Activated CD8-positive, alpha-beta T cell treated with anti-CD3 and anti-CD28 coated beads, Interleukin-2, amount 10 ng/mL, durations not matched to agents 7 days and 5 days (primary cell): ENCODE measurements at regions of chr2 and their contacts with region 1.

Region 1: GRCh38 chr2:231052494-231053451 is 3.9 kb upstream of the PSMD1 start:
- DNase-seq: peak; percentile 88
- ATAC-seq: peak; percentile 78
- H3K4me3 Mint-ChIP-seq: peak overlapping the region; percentile 84
- H3K27ac Mint-ChIP-seq: peak overlapping the region; percentile 15
- H3K4me1 Mint-ChIP-seq: peaks cover 46% of the 10 kb centered on the region
- H3K27me3 Mint-ChIP-seq: peaks cover 22% of the 10 kb centered on the region

Region 2: DNA sequence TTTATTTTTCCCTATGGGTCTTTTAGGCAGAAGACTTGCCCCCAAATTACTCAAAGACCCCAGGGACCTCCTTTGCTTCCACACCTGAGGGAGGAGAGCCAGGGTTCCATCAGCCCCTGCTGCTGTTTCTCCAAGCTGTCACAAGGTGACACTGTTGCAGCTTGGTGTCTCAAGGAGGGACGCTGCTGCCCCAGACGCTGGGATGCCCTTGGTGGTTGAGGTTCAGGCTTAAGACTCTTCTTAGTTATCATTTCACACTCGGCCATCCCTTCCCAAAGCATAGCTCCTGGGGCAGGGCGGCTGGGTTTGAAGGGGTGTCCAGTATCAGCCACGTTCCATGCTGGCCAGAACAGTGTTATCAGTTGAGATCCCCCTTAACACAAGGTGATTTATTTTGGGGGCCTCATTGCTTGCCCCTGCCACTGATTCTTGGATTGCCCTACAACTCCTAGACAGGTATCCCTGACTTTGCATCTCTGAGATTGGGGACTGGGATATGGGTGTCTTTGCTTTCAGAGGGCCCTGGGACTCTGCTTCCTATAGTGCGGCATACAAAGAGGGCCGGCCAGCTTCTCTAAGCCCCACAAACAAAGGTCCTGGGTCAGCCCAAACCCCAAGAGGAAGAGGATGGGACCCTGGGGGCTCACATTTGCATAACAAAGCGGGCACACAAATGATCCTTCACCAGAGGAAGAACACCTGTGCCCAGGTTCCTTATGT is 150.4 kb before region 1 on chr2:
- CTCF ChIA-PET with region 1: interaction called, 13 read pairs
- POLR2A ChIA-PET with region 1: no interaction called
- DNase-seq: peak; percentile 75
- ATAC-seq: peak; percentile 52
- H3K4me3 Mint-ChIP-seq: no peak overlapping the region
- H3K27ac Mint-ChIP-seq: no peak overlapping the region
- H3K4me1 Mint-ChIP-seq: peaks cover 37% of the 10 kb centered on the region
- H3K27me3 Mint-ChIP-seq: no peaks in the 10 kb centered on the region

Region 3: DNA sequence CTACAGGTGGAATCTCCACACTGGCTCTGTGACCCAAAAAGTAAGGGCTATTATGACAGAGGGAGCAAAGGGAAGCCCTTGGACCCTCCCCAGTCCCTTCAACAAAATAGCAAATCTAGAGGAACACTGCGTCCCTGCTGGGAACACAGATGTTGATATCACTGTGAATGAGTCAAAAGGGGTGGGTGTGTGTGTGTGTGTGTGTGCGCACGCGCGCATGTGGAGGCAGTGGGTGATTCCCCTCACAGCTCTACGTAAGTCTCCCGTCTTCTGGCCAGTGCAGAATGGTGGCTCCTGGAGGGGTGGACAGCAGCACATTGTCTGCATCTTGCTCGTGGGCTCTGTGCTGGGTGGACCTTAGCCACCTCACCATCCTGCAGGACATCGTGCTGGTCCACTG is 23.2 kb before region 1 on chr2:
- CTCF ChIA-PET with region 1: interaction called, 16 read pairs
- POLR2A ChIA-PET with region 1: no interaction called
- DNase-seq: no peak
- ATAC-seq: no peak
- H3K4me3 Mint-ChIP-seq: no peak overlapping the region
- H3K27ac Mint-ChIP-seq: no peak overlapping the region
- H3K4me1 Mint-ChIP-seq: no peaks in the 10 kb centered on the region
- H3K27me3 Mint-ChIP-seq: peaks cover 31% of the 10 kb centered on the region

Region 4: DNA sequence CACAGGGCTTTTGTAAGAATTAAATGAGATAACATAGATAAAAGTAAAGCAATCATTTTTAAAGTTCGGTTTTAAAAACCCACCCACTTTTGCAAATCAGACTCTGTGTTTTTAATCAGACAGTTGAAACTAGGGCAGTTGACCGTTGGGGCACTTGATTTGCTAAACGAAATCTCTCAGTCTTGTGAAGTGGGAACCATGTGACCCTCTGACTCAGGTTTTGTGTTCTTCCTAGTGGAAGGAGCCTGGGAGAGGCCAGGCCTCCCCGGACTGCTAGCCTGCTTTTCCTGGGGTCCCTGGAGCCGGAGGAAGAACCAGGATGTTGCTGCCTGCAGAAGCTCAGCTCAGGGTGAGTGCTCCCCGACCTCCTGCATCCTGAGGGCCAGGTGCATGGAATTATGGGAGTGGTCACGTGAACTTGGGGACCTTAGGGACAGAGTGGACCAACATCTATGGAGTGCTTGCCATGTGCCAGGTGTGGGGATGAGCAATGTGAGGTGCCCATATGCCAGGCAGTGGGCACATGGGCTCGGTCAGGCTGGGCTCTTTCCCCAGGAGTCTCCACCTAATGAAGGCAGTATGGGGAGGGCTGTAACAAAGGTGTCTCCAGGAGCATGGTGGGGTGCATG is 11.6 kb before region 1 on chr2:
- CTCF ChIA-PET with region 1: interaction called, 17 read pairs
- POLR2A ChIA-PET with region 1: interaction called, 3 read pairs
- DNase-seq: no peak
- ATAC-seq: no peak
- H3K4me3 Mint-ChIP-seq: no peak overlapping the region
- H3K27ac Mint-ChIP-seq: no peak overlapping the region
- H3K4me1 Mint-ChIP-seq: peaks cover 2% of the 10 kb centered on the region
- H3K27me3 Mint-ChIP-seq: peaks cover 43% of the 10 kb centered on the region

Region 5: DNA sequence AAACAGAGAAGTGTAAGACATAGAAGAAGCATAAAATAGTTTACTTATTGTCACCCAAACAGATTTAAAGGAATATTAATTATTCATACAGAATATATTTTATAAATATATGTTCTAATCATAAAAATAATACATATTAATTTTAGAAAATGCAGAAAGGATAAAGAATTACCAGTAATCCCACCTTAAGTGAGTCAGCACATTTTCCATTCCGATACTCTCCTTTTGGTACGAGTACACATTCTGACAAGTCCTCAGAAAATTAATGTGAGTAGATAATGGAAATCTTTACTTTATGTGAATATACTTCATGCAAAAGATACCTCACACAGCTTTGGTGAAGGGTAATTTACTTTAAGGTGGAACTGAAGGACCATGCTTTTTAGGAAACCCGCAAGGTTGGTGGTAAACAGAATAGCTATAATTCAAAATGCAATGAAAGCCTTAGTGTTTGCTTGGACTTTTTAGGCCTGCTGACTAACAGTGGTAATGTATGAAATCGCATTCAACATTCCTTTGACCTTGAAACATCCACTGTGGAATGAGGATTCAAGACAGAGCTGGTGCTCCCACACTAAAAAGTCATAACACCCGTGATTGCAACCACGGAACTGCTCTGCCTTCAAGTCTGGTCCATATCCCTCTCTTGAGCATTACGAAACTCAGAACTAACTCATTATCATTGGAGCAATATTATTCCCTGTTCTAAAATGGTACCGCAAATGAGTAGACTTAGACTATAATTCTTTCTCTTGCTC is 100.2 kb after region 1 on chr2:
- CTCF ChIA-PET with region 1: no interaction called
- POLR2A ChIA-PET with region 1: no interaction called
- DNase-seq: no peak
- ATAC-seq: no peak
- H3K4me3 Mint-ChIP-seq: no peak overlapping the region
- H3K27ac Mint-ChIP-seq: no peak overlapping the region
- H3K4me1 Mint-ChIP-seq: no peaks in the 10 kb centered on the region
- H3K27me3 Mint-ChIP-seq: no peaks in the 10 kb centered on the region